ENCODE measurements at regions of chr17 and their contacts with region 1.

Region 1: DNA sequence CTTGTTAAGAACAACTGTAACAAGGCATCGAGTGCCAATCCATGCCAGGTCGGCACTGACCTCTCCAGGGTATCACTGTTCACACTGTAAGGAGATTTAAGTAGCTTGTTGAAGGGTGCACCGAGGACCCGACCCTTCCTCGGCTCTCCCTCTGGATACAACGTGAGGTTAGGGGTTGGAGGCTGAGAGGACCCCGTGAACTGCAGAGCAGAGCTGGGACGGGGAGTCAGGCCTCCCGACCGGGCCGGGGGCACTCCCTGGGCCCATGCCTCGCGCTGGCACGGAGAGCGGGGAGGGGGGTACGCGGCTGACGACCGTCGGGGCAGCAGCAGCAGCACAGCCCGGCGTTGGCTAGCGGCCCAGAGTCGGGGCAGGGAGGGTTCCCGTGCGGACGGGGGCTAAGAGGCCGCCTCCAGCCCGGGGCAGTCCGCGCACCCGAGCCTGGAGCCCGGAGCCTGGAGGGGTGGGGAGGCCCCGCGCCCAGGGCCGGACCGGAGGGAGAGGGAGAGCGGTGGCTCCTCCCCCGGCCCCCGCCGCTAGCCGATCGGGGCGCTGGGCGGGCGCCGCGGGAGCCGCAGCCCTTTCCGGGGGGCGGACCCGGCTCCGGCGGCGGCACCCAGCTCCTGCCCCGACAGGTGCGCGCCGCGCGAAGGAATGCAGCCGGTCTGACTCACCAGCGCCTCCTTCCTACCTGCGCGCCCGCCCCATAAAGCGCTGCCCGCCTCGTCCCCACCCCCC is at the start of gene ITGB4:
- DNase-seq: peak; percentile 56 to 75 (median 68)
- ATAC-seq: peak; percentile 91
- H3K4me3 ChIP-seq: peak within 1 kb of the TSS; percentile 41
- H3K4me3 Mint-ChIP-seq: peak within 1 kb of the TSS; percentile 78 to 90 (median 82)
- H3K27ac ChIP-seq: peak within 1 kb of the TSS; percentile 39
- H3K27ac Mint-ChIP-seq: peak within 1 kb of the TSS in 7 of 9 donors; percentile 14 to 78 (median 36)
- H3K4me1 ChIP-seq: peaks cover 0 to 5% of the 10 kb centered on the region in 2 donors
- H3K4me1 Mint-ChIP-seq: peaks cover 4 to 7% (median 6%) of the 10 kb centered on the region in 7 donors
- H3K27me3 ChIP-seq: no peaks in the 10 kb centered on the region
- H3K27me3 Mint-ChIP-seq: peaks cover 0 to 30% (median 4%) of the 10 kb centered on the region in 5 donors
- total RNA-seq, gene ITGB4: 0.49 to 1.8 (median 1.2) TPM

Region 2: DNA sequence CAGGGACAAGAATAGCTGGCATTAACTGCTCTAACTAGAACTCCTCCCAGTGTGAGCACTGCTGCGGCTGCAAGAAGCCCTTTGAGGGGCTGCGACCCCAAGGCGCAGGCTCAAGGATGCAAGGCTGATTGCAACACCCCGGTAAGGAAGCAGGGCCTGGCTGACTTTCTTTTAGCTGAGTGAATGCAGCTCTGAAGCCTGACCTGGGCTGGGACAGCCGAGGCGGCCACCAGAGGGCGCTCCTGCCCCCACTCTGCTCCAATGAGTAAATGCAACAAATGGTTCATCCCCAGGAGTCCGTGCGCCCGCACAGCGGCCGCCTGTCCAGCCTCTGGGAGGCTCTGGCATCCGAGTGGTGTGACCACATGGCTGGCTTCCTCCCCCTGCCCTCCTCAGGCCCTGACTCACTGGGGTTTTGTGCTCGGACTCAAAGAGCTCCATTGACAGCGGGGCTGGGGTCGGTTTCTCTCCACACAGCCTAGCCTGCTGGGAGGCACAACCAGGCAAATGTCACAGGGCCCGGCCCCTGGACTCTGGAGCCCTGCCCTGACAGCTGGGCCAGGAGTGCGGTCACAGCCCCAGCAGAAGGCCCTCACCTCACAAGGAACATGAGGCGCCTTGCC is 87.9 kb before region 1 on chr17 and contains the start of gene SMIM5:
- CTCF ChIA-PET with region 1: no interaction called
- POLR2A ChIA-PET with region 1: no interaction called
- intact Hi-C with region 1: loop called in 1 of 2 experiments (anchors 1 kb)
- DNase-seq: peak; percentile 62 to 85 (median 80)
- ATAC-seq: peak; percentile 93
- H3K4me3 ChIP-seq: no peak within 1 kb of the TSS
- H3K4me3 Mint-ChIP-seq: peak within 1 kb of the TSS in 2 of 10 donors; percentile 19 to 21
- H3K27ac ChIP-seq: no peak within 1 kb of the TSS
- H3K27ac Mint-ChIP-seq: peak within 1 kb of the TSS in 3 of 9 donors; percentile 12 to 43 (median 35)
- H3K4me1 ChIP-seq: peaks cover 0 to 8% of the 10 kb centered on the region in 2 donors
- H3K4me1 Mint-ChIP-seq: peaks cover 3 to 14% (median 7%) of the 10 kb centered on the region in 7 donors
- H3K27me3 ChIP-seq: no peaks in the 10 kb centered on the region
- H3K27me3 Mint-ChIP-seq: no peaks in the 10 kb centered on the region
- total RNA-seq, gene SMIM5: 0.43 to 2.4 (median 0.84) TPM

Region 3: DNA sequence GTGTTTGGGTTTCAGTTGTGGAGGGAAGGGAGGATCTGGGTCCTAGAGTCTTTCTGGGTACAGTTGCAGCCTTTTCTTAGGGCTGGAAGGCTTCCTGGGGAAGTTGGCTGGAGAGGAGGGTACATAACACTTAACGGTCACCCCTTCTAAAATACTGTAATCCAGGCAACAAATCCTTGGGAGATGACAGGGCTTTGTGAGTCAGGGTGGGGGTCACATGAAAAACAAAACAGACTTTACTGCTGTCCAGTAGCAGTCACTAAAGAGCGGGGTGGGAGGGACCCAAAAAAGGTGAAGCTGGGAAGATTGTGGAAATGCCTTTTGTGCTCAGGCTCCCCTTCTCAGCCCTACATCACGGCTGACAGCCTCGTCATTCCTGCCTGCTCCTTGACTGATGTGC is 47.4 kb before region 1 on chr17:
- CTCF ChIA-PET with region 1: interaction called, 11 read pairs
- POLR2A ChIA-PET with region 1: no interaction called
- intact Hi-C with region 1: loop called in 1 of 2 experiments (anchors 1 kb)
- DNase-seq: no peak
- ATAC-seq: no peak
- H3K4me3 ChIP-seq: no peak overlapping the region
- H3K4me3 Mint-ChIP-seq: no peak overlapping the region
- H3K27ac ChIP-seq: no peak overlapping the region
- H3K27ac Mint-ChIP-seq: no peak overlapping the region
- H3K4me1 ChIP-seq: peaks cover 0 to 8% of the 10 kb centered on the region in 2 donors
- H3K4me1 Mint-ChIP-seq: peaks cover 11 to 25% (median 20%) of the 10 kb centered on the region in 7 donors
- H3K27me3 ChIP-seq: no peaks in the 10 kb centered on the region
- H3K27me3 Mint-ChIP-seq: no peaks in the 10 kb centered on the region

Region 4: GRCh38 chr17:75679706-75680442 is 41.0 kb before region 1 on chr17:
- CTCF ChIA-PET with region 1: interaction called, 11 read pairs
- POLR2A ChIA-PET with region 1: no interaction called
- intact Hi-C with region 1: loop called in 1 of 2 experiments (anchors 1 kb)
- DNase-seq: no peak
- ATAC-seq: no peak
- H3K4me3 ChIP-seq: no peak overlapping the region
- H3K4me3 Mint-ChIP-seq: no peak overlapping the region
- H3K27ac ChIP-seq: no peak overlapping the region
- H3K27ac Mint-ChIP-seq: no peak overlapping the region
- H3K4me1 ChIP-seq: no peaks in the 10 kb centered on the region
- H3K4me1 Mint-ChIP-seq: peaks cover 0 to 26% (median 19%) of the 10 kb centered on the region in 7 donors
- H3K27me3 ChIP-seq: no peaks in the 10 kb centered on the region
- H3K27me3 Mint-ChIP-seq: no peaks in the 10 kb centered on the region

Region 5: DNA sequence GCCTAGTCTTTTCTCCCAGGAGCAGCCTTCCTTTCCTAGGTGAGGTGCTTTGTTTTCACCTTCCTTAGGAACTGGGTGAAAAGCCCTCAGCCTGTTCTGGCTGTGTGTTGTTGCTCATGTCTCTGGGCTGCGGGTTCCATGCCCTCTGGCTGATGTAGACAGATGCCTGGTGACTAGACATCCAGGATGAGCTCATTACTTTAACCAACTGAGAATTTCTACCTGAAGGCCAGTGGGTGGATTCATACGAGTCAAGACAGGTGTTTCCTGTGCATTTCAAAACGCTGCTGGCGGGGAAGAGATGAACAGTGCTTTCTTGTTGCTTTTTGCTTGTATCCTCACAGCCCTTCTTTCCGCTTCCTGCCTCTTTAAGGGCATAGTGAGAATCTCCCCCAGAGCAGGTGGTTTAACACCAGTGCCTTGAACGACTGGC is 31.4 kb before region 1 on chr17:
- CTCF ChIA-PET with region 1: interaction called, 13 read pairs
- POLR2A ChIA-PET with region 1: interaction called, 6 read pairs
- intact Hi-C with region 1: loop called in 1 of 2 experiments (anchors 1 kb)
- DNase-seq: peak in 8 of 9 donors; percentile 31 to 85 (median 80)
- ATAC-seq: peak; percentile 86
- H3K4me3 ChIP-seq: no peak overlapping the region
- H3K4me3 Mint-ChIP-seq: peak overlapping the region; percentile 52 to 83 (median 68)
- H3K27ac ChIP-seq: peak overlapping the region; percentile 69
- H3K27ac Mint-ChIP-seq: peak overlapping the region; percentile 78 to 95 (median 93)
- H3K4me1 ChIP-seq: peaks cover 0 to 31% of the 10 kb centered on the region in 2 donors
- H3K4me1 Mint-ChIP-seq: peaks cover 39 to 69% (median 59%) of the 10 kb centered on the region in 7 donors
- H3K27me3 ChIP-seq: no peaks in the 10 kb centered on the region
- H3K27me3 Mint-ChIP-seq: no peaks in the 10 kb centered on the region

Region 6: DNA sequence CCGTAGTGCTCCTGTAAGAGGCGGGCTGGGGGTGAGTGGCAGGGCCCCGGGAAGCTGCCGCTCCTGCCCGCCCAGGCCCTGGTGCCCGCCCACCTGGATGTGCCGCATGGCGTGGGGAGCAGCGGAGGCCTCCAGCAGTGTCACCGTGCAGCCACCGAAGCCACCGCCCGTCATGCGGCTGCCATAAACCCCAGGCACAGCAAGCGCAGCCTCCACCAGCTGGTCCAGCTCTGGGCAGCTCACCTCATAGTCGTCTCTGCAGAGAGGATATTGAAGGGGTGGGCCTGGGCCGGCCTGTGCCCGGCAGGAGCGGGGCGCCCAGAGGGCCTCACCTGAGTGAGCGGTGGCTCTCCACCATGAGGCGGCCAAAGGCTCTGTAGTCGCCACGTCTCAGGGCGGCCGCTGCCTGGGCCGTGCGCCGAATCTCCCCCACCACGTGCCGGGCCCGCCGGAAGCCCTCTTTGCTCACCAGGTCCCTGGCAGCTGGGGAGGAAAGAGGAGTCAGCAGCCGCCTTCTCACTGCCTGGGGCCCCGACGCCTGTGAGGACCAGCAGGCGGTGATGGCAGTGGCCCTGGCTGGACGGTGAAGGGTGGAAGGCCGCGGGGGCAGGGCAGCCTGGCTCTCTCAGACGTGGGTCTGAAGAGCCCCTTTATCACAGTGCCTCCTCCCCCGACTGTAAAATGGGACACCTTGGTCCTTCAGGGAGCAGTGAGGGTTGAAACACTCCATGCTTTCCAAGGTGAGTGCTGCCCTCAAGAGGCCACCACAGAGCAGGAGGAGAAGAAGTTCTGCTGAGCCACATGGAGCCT is 37.4 kb after region 1 on chr17:
- CTCF ChIA-PET with region 1: no interaction called
- POLR2A ChIA-PET with region 1: no interaction called
- intact Hi-C with region 1: no loop called
- DNase-seq: no peak
- ATAC-seq: no peak
- H3K4me3 ChIP-seq: no peak overlapping the region
- H3K4me3 Mint-ChIP-seq: no peak overlapping the region
- H3K27ac ChIP-seq: no peak overlapping the region
- H3K27ac Mint-ChIP-seq: no peak overlapping the region
- H3K4me1 ChIP-seq: peaks cover 5 to 12% of the 10 kb centered on the region in 2 donors
- H3K4me1 Mint-ChIP-seq: peaks cover 6 to 19% (median 10%) of the 10 kb centered on the region in 7 donors
- H3K27me3 ChIP-seq: no peaks in the 10 kb centered on the region
- H3K27me3 Mint-ChIP-seq: no peaks in the 10 kb centered on the region

Region 7: GRCh38 chr17:76612977-76613851 is 892.3 kb after region 1 on chr17:
- CTCF ChIA-PET with region 1: no interaction called
- POLR2A ChIA-PET with region 1: no interaction called
- intact Hi-C with region 1: no loop called
- DNase-seq: no peak
- ATAC-seq: no peak
- H3K4me3 ChIP-seq: no peak overlapping the region
- H3K4me3 Mint-ChIP-seq: no peak overlapping the region
- H3K27ac ChIP-seq: no peak overlapping the region
- H3K27ac Mint-ChIP-seq: peak overlapping the region in 3 of 9 donors; percentile 25 to 48 (median 32)
- H3K4me1 ChIP-seq: no peaks in the 10 kb centered on the region
- H3K4me1 Mint-ChIP-seq: peaks cover 0 to 4% (median 0%) of the 10 kb centered on the region in 7 donors
- H3K27me3 ChIP-seq: no peaks in the 10 kb centered on the region
- H3K27me3 Mint-ChIP-seq: peaks cover 0 to 12% (median 0%) of the 10 kb centered on the region in 5 donors